ENCODE measurements at regions of chr6 and their contacts with region 1.

Region 1: DNA sequence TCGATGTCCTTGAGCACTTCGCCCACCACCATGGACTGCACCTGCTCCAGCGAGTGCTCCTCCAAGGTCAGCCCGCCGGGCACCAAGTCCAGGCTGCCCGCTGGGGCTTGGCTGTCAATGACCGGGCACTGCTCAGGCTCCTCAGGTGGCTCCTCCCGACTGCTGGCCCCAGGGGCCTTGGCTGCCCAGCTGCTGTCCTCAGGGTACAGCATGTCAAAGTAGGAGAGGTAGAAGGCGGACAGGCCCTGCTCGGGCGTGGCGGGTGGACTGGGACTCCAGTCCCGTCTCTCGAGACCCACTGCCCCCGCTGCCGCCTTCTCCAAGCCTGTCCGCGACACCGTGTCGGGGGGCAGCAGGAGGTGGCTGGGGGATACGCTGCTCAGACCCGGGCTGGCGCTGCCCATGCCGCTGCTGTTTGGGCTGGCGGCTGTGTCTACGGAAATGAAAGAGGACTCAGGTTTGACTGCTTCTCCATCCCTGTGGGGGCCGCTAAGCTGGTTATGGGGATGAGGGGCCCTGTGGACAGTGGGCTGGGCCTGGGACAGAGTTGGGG is 12.0 kb downstream of the SPDEF start:
- DNase-seq: no peak
- ATAC-seq: no peak
- H3K4me3 ChIP-seq: no peak overlapping the region
- H3K27ac ChIP-seq: no peak overlapping the region
- H3K4me1 ChIP-seq: peaks cover 5% of the 10 kb centered on the region; the same call in 1 of the 2 replicates
- H3K27me3 ChIP-seq: peaks cover 15% of the 10 kb centered on the region; the same call in 1 of the 2 replicates
- CTCF ChIP-seq: no peak
- POLR2A ChIP-seq: no peak
- RAD21 ChIP-seq: no peak

Region 2: DNA sequence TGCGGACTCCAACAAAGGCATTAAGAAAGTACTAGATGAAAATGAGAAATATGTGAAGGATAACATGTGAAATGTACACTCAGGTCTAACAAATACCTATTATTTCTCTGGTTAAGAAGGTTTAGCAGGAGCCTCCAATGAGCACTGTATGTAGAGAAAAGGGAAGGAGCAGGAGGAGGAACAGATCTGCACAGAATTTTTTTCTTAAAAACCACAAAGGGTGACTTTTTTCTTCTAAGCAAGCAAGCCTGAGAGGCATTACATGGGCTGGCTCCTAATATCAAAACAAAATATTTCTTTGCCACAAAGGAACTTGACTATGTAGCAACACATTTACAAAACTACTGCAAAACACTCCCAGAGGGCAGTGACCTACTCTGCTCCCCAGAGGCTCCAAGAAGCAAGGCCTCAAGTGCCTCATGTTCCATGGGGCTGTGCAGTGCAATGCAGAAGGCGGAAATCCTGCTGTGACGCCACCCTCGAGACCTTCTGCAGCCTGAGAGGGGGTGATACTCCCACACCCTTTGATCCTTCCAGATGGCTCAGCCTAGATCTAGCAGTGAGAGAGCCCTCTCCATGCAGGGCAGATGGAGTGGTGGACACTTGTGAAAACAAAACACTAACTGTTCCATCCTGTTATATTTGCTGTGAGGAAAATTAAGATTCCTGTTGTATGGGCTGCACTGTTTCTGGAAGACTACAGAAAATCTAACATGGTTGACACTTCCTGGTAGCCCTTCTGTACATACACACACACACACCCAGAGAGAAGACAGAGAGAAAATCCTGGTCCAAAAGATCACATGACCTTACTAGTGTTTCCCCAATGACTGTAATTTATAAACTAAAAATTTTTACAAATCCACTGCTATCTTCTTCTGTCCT is 259.3 kb before region 1 on chr6:
- CTCF ChIA-PET with region 1: no interaction called
- POLR2A ChIA-PET with region 1: interaction called, 11 read pairs
- dilution Hi-C with region 1: no loop called
- in situ Hi-C with region 1: no loop called
- intact Hi-C with region 1: no loop called
- DNase-seq: peak; percentile 73
- ATAC-seq: peak; percentile 91
- H3K4me3 ChIP-seq: no peak overlapping the region
- H3K27ac ChIP-seq: peak overlapping the region; percentile 48; the same call in 1 of the 2 replicates
- H3K4me1 ChIP-seq: peaks cover 10% of the 10 kb centered on the region
- H3K27me3 ChIP-seq: no peaks in the 10 kb centered on the region
- CTCF ChIP-seq: no peak
- POLR2A ChIP-seq: no peak
- RAD21 ChIP-seq: no peak

Region 3: GRCh38 chr6:34476447-34476846 is 67.7 kb before region 1 on chr6:
- CTCF ChIA-PET with region 1: no interaction called
- POLR2A ChIA-PET with region 1: no interaction called
- dilution Hi-C with region 1: no loop called
- in situ Hi-C with region 1: no loop called
- intact Hi-C with region 1: no loop called
- DNase-seq: no peak
- ATAC-seq: no peak; the same call in 1 of the 2 replicates
- H3K4me3 ChIP-seq: no peak overlapping the region
- H3K27ac ChIP-seq: no peak overlapping the region
- H3K4me1 ChIP-seq: peaks cover 8% of the 10 kb centered on the region; the same call in 1 of the 2 replicates
- H3K27me3 ChIP-seq: peaks cover 3% of the 10 kb centered on the region
- CTCF ChIP-seq: no peak
- POLR2A ChIP-seq: no peak
- RAD21 ChIP-seq: no peak